ENCODE measurements at regions of chr6 and their contacts with region 1.

Region 1: GRCh38 chr6:75368151-75368779 is 83.7 kb upstream of the TMEM30A start:
- DNase-seq: peak; percentile 77
- ATAC-seq: peak; percentile 85
- H3K4me3 ChIP-seq: no peak overlapping the region
- H3K27ac ChIP-seq: peak overlapping the region; percentile 30; the same call in 1 of the 2 replicates
- H3K4me1 ChIP-seq: 0 out of 2 replicates have a peak, but pooled peaks cover 9% of the 10 kb centered on the region
- H3K27me3 ChIP-seq: no peaks in the 10 kb centered on the region
- CTCF ChIP-seq: peak; percentile 76

Region 2: GRCh38 chr6:75296811-75297779 is 71.2 kb before region 1 on chr6:
- CTCF ChIA-PET with region 1: no interaction called
- POLR2A ChIA-PET with region 1: no interaction called
- intact Hi-C with region 1: loop called (anchors 2 kb)
- DNase-seq: peak; percentile 61
- ATAC-seq: peak; percentile 77
- H3K4me3 ChIP-seq: no peak overlapping the region
- H3K27ac ChIP-seq: no peak overlapping the region
- H3K4me1 ChIP-seq: no peaks in the 10 kb centered on the region
- H3K27me3 ChIP-seq: no peaks in the 10 kb centered on the region
- CTCF ChIP-seq: peak; percentile 74

Region 3: DNA sequence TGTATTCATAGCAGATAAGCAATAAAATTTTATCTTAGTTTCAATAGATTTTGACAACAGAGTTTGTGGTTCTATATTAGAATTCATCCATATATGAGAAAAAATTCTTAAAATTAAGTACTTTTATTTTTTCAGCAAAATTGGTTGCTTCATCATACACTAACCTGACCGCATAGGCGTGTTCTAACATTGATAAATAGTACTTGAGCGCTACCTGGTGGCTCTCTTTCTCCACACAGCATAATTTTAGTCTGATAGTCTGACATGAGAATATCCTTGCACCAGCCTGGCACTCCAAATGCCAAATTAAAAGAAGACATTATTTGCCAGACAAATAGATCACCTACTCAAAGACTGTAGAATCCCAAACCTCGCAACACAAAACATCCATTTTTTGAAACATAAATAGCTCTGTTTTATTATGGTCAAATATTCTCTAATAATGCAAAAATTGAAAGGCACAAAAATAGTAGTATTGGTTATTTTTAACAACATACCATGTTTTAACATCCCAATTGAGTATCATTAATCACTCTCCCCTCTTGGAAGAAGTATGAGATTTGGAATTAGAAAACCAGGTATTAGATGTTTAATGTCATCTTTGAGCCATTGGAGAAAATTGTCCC is 158.3 kb after region 1 on chr6:
- CTCF ChIA-PET with region 1: interaction called, 10 read pairs
- POLR2A ChIA-PET with region 1: no interaction called
- intact Hi-C with region 1: loop called (anchors 1 kb)
- DNase-seq: peak; percentile 82
- ATAC-seq: peak; percentile 68
- H3K4me3 ChIP-seq: no peak overlapping the region
- H3K27ac ChIP-seq: no peak overlapping the region
- H3K4me1 ChIP-seq: peaks cover 5% of the 10 kb centered on the region; the same call in 1 of the 2 replicates
- H3K27me3 ChIP-seq: no peaks in the 10 kb centered on the region
- CTCF ChIP-seq: peak; percentile 72

Region 4: GRCh38 chr6:75546381-75546780 is 178.1 kb after region 1 on chr6:
- CTCF ChIA-PET with region 1: no interaction called
- POLR2A ChIA-PET with region 1: no interaction called
- intact Hi-C with region 1: no loop called
- DNase-seq: peak; percentile 43
- ATAC-seq: no peak
- H3K4me3 ChIP-seq: no peak overlapping the region
- H3K27ac ChIP-seq: no peak overlapping the region
- H3K4me1 ChIP-seq: no peaks in the 10 kb centered on the region
- H3K27me3 ChIP-seq: no peaks in the 10 kb centered on the region
- CTCF ChIP-seq: peak; percentile 56; the same call in 1 of the 2 replicates

Region 5: GRCh38 chr6:75588947-75589346 is 220.7 kb after region 1 on chr6:
- CTCF ChIA-PET with region 1: no interaction called
- POLR2A ChIA-PET with region 1: no interaction called
- intact Hi-C with region 1: no loop called
- DNase-seq: no peak
- ATAC-seq: no peak
- H3K4me3 ChIP-seq: no peak overlapping the region
- H3K27ac ChIP-seq: no peak overlapping the region
- H3K4me1 ChIP-seq: no peaks in the 10 kb centered on the region
- H3K27me3 ChIP-seq: no peaks in the 10 kb centered on the region
- CTCF ChIP-seq: no peak